ENCODE measurements at regions of chr21 and their contacts with region 1.

Region 1: DNA sequence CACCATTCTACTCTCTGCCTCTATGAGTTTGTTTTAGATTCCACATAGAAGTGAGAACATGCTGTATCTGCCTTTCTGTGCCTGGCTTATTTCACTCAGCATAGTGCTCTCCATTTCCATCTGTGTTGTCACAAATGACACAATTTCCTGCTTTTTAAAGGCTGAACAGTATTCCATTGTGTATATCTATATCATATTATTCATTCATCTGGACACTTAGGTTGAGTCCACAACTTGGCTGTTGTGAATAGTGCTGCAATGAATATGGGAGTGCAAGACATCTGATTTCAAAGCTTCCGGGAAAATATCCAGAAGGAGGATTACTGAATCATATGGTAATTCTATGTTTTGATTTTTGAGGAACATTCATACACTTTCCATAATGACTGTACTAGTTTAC is 20.1 kb upstream of the DONSON start:
- DNase-seq: no peak
- ATAC-seq: no peak
- H3K4me3 Mint-ChIP-seq: no peak overlapping the region
- H3K27ac Mint-ChIP-seq: no peak overlapping the region
- H3K4me1 Mint-ChIP-seq: peaks cover 4% of the 10 kb centered on the region
- H3K27me3 Mint-ChIP-seq: no peaks in the 10 kb centered on the region

Region 2: GRCh38 chr21:32475164-32475812 is 1133.3 kb before region 1 on chr21:
- CTCF ChIA-PET with region 1: no interaction called
- POLR2A ChIA-PET with region 1: no interaction called
- intact Hi-C with region 1: no loop called
- DNase-seq: no peak
- ATAC-seq: no peak
- H3K4me3 Mint-ChIP-seq: no peak overlapping the region
- H3K27ac Mint-ChIP-seq: no peak overlapping the region
- H3K4me1 Mint-ChIP-seq: peaks cover 7% of the 10 kb centered on the region
- H3K27me3 Mint-ChIP-seq: no peaks in the 10 kb centered on the region

Region 3: GRCh38 chr21:32834916-32835235 is 773.7 kb before region 1 on chr21:
- CTCF ChIA-PET with region 1: no interaction called
- POLR2A ChIA-PET with region 1: no interaction called
- intact Hi-C with region 1: loop called in 1 of 2 experiments (anchors 10 kb)
- DNase-seq: no peak
- ATAC-seq: no peak
- H3K4me3 Mint-ChIP-seq: no peak overlapping the region
- H3K27ac Mint-ChIP-seq: no peak overlapping the region
- H3K4me1 Mint-ChIP-seq: peaks cover 2% of the 10 kb centered on the region
- H3K27me3 Mint-ChIP-seq: no peaks in the 10 kb centered on the region

Region 4: GRCh38 chr21:33299181-33299752 is 309.3 kb before region 1 on chr21:
- CTCF ChIA-PET with region 1: no interaction called
- POLR2A ChIA-PET with region 1: no interaction called
- intact Hi-C with region 1: no loop called
- DNase-seq: peak; percentile 69
- ATAC-seq: peak; percentile 90
- H3K4me3 Mint-ChIP-seq: peak overlapping the region; percentile 19
- H3K27ac Mint-ChIP-seq: peak overlapping the region; percentile 85
- H3K4me1 Mint-ChIP-seq: peaks cover 44% of the 10 kb centered on the region
- H3K27me3 Mint-ChIP-seq: no peaks in the 10 kb centered on the region

Region 5: DNA sequence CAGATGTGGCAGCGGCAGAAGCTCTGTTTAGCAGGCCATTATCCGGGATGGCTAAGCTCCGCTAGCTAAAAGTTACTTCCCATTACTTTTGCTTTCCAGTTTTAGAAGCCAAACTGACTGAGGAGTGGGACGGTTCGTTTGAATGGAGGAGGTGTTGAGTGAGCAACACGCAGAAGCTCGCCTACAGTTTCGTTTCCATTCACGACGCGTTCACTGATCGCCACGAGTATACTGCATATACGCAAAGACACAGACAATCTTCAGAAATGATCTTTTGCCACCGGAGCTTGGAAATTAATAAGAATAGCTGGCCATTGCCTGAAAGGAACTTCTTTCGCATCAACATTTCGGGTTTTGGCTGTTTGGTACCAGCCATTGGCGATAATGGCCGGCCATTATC is 51.1 kb before region 1 on chr21:
- CTCF ChIA-PET with region 1: interaction called, 16 read pairs
- POLR2A ChIA-PET with region 1: no interaction called
- intact Hi-C with region 1: no loop called
- DNase-seq: no peak
- ATAC-seq: no peak
- H3K4me3 Mint-ChIP-seq: no peak overlapping the region
- H3K27ac Mint-ChIP-seq: no peak overlapping the region
- H3K4me1 Mint-ChIP-seq: peaks cover 70% of the 10 kb centered on the region
- H3K27me3 Mint-ChIP-seq: no peaks in the 10 kb centered on the region

Region 6: DNA sequence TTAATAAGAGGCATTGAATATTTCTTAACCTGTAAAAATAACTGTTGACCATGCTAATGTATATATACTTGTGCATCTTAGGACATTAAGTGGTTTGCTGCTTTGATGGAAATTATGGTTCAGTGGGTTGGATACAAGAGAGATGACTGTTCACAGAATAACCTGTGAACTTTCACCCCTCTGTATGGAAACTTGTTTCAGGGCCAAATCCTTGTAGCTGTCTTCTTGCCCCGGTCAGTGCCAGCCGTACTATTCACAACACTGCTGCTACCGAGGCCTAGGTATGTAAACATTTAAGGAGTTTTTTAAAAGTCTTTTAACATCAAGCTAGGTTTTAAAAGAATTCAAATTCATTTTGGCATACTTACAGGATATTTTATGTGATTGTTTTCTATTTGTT is 36.2 kb before region 1 on chr21:
- CTCF ChIA-PET with region 1: interaction called, 20 read pairs
- POLR2A ChIA-PET with region 1: no interaction called
- intact Hi-C with region 1: no loop called
- DNase-seq: no peak
- ATAC-seq: no peak
- H3K4me3 Mint-ChIP-seq: no peak overlapping the region
- H3K27ac Mint-ChIP-seq: no peak overlapping the region
- H3K4me1 Mint-ChIP-seq: peaks cover 14% of the 10 kb centered on the region
- H3K27me3 Mint-ChIP-seq: no peaks in the 10 kb centered on the region

Region 7: DNA sequence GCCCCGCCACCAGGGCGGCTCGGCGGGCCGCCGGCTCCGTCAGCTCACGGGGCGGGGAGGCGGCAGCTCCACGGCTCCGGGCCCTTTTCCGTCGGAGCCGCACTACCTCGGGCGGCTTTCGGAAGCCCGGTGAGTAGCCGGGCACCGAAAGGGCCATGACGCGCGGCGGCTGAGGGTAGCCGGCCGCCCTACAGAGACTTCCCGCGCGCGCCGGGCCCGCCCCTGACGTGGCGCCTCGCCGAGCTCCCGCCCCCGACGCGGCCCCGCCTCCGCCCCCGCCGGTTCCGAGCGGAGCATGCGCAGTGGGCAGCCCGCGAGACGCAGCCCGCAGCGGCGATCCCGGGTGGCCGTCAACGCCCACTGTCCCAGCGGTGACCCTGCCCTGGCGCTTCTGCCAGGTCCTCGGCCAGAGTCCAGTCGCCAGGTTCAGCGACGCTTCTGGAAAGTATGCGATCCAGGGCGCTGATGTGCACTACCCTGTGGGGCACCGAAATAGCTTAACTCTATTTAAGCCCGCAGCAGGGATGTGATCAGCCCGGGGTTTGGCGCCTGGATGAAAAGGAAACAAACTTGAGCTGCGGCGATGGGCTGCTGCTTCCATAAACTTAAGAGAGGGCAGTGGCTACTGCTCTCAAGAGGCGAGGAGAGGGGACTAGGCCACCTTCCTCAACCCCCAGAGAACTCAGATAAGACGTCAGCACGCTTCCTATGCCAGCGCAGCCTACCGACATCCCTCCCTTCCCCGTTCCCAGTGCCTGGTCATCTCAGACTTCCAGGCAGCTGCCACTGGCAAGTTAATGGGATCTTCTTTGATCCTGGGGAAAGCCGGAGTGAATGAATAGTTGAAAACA is 19.8 kb before region 1 on chr21 and contains the start of gene DONSON:
- CTCF ChIA-PET with region 1: interaction called, 24 read pairs
- POLR2A ChIA-PET with region 1: interaction called, 5 read pairs
- intact Hi-C with region 1: loop called (anchors 1 to 2 kb)
- DNase-seq: peak; percentile 93
- ATAC-seq: peak; percentile 92
- H3K4me3 Mint-ChIP-seq: peak within 1 kb of the TSS; percentile 91
- H3K27ac Mint-ChIP-seq: peak within 1 kb of the TSS; percentile 87
- H3K4me1 Mint-ChIP-seq: peaks cover 19% of the 10 kb centered on the region
- H3K27me3 Mint-ChIP-seq: no peaks in the 10 kb centered on the region
- total RNA-seq, gene DONSON: 39.5 to 41.8 TPM

Region 8: DNA sequence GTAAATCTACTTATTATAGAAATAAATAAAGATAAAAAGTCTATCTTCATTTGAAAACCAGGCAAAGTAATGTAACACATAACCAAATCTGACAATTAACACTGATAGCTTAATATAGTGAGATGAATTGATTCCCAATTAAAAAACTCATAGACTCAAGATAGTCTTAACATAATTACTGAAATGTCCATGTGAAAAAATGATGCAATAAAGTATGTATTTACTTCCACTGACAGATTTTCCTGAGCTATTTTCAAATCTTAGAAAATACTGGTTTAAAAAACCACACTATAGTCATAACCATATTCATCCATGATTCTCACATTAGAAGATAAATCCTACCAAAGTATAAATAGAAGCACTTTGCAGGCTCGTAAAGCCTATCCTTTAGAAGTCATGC is 10.5 kb before region 1 on chr21:
- CTCF ChIA-PET with region 1: interaction called, 11 read pairs
- POLR2A ChIA-PET with region 1: no interaction called
- intact Hi-C with region 1: no loop called
- DNase-seq: no peak
- ATAC-seq: no peak
- H3K4me3 Mint-ChIP-seq: no peak overlapping the region
- H3K27ac Mint-ChIP-seq: no peak overlapping the region
- H3K4me1 Mint-ChIP-seq: no peaks in the 10 kb centered on the region
- H3K27me3 Mint-ChIP-seq: no peaks in the 10 kb centered on the region

Region 9: GRCh38 chr21:33619726-33620125 is 11.2 kb after region 1 on chr21:
- CTCF ChIA-PET with region 1: interaction called, 20 read pairs
- POLR2A ChIA-PET with region 1: no interaction called
- intact Hi-C with region 1: no loop called
- DNase-seq: no peak
- ATAC-seq: no peak
- H3K4me3 Mint-ChIP-seq: no peak overlapping the region
- H3K27ac Mint-ChIP-seq: no peak overlapping the region
- H3K4me1 Mint-ChIP-seq: no peaks in the 10 kb centered on the region
- H3K27me3 Mint-ChIP-seq: no peaks in the 10 kb centered on the region

Region 10: GRCh38 chr21:34715518-34715917 is 1107.0 kb after region 1 on chr21:
- CTCF ChIA-PET with region 1: no interaction called
- POLR2A ChIA-PET with region 1: no interaction called
- intact Hi-C with region 1: no loop called
- DNase-seq: no peak
- ATAC-seq: peak; percentile 87
- H3K4me3 Mint-ChIP-seq: no peak overlapping the region
- H3K27ac Mint-ChIP-seq: no peak overlapping the region
- H3K4me1 Mint-ChIP-seq: peaks cover 12% of the 10 kb centered on the region
- H3K27me3 Mint-ChIP-seq: peaks cover 16% of the 10 kb centered on the region

Measured in activated CD4-positive, alpha-beta T cell treated with anti-CD3 and anti-CD28 coated beads for 36 hours (primary cell).